HepG2 (cell line): ENCODE measurements at regions of chr11 and their contacts with region 1.

Region 1: GRCh38 chr11:34653826-34654490 is 33.1 kb downstream of the EHF start:
- DNase-seq: peak; percentile 92
- ATAC-seq: peak; percentile 84
- H3K4me3 ChIP-seq: peak overlapping the region in 2 of 3 experiments; percentile 40 to 56; a peak in 5 of 6 replicates
- H3K27ac ChIP-seq: peak overlapping the region; percentile 100
- H3K4me1 ChIP-seq: peaks cover 83% of the 10 kb centered on the region
- H3K27me3 ChIP-seq: no peaks in the 10 kb centered on the region
- CTCF ChIP-seq: peak; percentile 78
- EP300 ChIP-seq: no peak; a peak in 1 of 4 replicates
- POLR2A ChIP-seq: peak; percentile 35 to 74; a peak in 3 of 4 replicates
- RAD21 ChIP-seq: peak; percentile 72; the same call in 1 of the 2 replicates

Region 2: DNA sequence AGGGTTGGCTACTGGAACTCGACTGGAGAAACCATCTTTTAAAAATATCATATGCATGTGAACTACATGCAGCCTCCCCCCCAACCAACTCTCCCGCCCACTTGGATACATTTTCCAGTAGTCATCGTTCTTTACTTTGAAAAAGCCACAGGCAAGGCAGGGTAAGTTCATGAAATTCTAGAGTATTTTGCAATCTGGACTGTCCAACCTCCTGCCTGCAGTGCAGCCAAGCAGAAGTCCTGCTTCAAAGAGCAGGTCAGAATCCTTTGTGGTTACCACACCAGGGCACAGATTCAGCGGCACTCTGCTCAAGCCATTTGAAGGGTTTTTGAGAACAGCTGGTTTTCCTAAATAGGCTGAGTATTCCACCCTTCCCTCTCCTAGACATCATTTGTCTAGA is 152.5 kb before region 1 on chr11:
- CTCF ChIA-PET with region 1: no interaction called
- POLR2A ChIA-PET with region 1: no interaction called
- in situ Hi-C with region 1: no loop called
- intact Hi-C with region 1: loop called (anchors 1 kb)
- DNase-seq: peak; percentile 92
- ATAC-seq: peak; percentile 97
- H3K4me3 ChIP-seq: no peak overlapping the region
- H3K27ac ChIP-seq: peak overlapping the region; percentile 60
- H3K4me1 ChIP-seq: peaks cover 76% of the 10 kb centered on the region
- H3K27me3 ChIP-seq: no peaks in the 10 kb centered on the region
- CTCF ChIP-seq: no peak
- EP300 ChIP-seq: peak; percentile 55 to 87
- POLR2A ChIP-seq: peak in 1 of 2 experiments; percentile 43; a peak in 2 of 4 replicates
- RAD21 ChIP-seq: no peak

Region 3: GRCh38 chr11:34599406-34599901 is 54.5 kb before region 1 on chr11:
- CTCF ChIA-PET with region 1: no interaction called
- POLR2A ChIA-PET with region 1: interaction called, 126 read pairs
- in situ Hi-C with region 1: loop called (anchors 10 kb)
- intact Hi-C with region 1: loop called (anchors 1 kb)
- DNase-seq: peak; percentile 79
- ATAC-seq: peak; percentile 1; the same call in 1 of the 3 replicates
- H3K4me3 ChIP-seq: peak overlapping the region; percentile 49 to 67 (median 66)
- H3K27ac ChIP-seq: peak overlapping the region; percentile 95
- H3K4me1 ChIP-seq: peaks cover 86% of the 10 kb centered on the region
- H3K27me3 ChIP-seq: no peaks in the 10 kb centered on the region
- CTCF ChIP-seq: no peak
- EP300 ChIP-seq: peak in 1 of 2 experiments; percentile 52; a peak in 1 of 4 replicates
- POLR2A ChIP-seq: no peak
- RAD21 ChIP-seq: no peak

Region 4: DNA sequence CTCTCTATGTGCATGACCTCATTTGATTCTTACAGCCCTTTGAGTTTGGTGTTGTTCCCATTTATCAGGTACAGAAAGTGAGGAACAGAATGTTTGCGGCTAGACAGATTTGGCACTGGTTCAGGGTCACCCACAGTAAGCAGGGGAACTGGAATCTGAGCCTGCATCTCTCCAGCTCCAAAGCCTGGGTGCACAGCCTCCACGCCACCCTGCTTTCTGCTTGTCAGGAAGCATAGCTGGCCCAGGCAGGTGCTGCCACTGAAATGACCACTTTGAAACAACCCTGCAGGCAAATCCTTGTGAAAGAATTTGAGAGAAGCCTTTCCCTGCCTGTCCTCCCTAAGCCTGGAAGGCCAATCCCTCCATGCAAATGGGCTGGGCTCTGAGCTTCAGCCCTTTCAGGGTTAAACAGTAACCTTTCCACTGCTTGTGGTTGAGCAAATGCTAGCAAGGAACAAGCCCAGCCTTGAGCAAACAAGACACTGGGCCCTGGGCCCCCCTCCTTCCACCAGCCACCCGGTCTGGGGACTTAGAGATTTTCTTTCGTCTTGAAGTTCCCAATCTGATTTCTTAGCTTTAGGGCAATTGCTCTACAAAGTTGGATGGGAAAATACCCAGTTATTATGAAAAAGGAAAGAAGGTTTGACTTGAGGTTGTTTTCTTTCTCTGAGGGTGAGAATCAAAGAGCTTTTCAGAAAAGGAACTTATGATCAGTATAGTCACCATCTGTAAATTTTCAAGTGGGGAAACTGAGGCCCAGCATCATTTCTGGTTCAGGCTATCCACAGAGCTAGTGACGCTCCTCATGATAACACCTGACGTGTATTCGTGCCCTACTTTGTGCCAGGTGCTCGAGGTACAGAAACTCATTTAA is 13.7 kb before region 1 on chr11:
- CTCF ChIA-PET with region 1: no interaction called
- POLR2A ChIA-PET with region 1: interaction called, 145 read pairs
- in situ Hi-C with region 1: no loop called
- intact Hi-C with region 1: loop called (anchors 1 kb)
- DNase-seq: peak; percentile 94
- ATAC-seq: peak; percentile 98
- H3K4me3 ChIP-seq: peak overlapping the region in 1 of 3 experiments; percentile 47; a peak in 2 of 6 replicates
- H3K27ac ChIP-seq: peak overlapping the region; percentile 66
- H3K4me1 ChIP-seq: peaks cover 82% of the 10 kb centered on the region
- H3K27me3 ChIP-seq: no peaks in the 10 kb centered on the region
- CTCF ChIP-seq: peak; percentile 27; the same call in 1 of the 2 replicates
- EP300 ChIP-seq: peak in 1 of 2 experiments; percentile 81; a peak in 2 of 4 replicates
- POLR2A ChIP-seq: peak in 1 of 2 experiments; percentile 52; a peak in 2 of 4 replicates
- RAD21 ChIP-seq: peak; percentile 32; the same call in 1 of the 2 replicates

Region 5: DNA sequence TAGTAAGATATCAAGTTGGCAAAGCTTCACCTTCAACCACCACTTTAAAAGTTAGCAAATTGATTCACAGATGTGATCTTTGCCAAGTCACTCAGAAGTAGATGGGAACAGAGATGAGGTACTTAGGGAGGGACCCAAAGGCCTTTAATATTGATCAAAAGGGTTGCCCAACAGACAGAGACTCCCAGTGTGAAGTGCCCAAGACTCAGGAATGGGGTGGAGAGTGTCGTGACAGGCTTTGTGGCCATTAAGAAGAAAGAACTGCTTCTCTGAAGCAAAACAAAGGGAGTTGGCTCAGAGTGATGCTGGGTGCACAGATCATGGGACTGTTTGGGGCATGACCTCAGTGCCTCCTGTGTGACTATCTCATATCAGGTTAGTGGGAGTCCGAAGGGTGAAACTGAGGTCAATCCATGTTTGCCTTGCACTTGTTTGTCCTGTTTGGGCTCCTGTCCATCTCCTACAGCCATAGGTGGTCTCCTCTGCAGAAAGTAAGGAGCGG is 129.9 kb after region 1 on chr11:
- CTCF ChIA-PET with region 1: no interaction called
- POLR2A ChIA-PET with region 1: interaction called, 4 read pairs
- in situ Hi-C with region 1: no loop called
- intact Hi-C with region 1: loop called (anchors 1 kb)
- DNase-seq: peak; percentile 98
- ATAC-seq: peak; percentile 96
- H3K4me3 ChIP-seq: peak overlapping the region; percentile 2 to 38 (median 26); a peak in 4 of 6 replicates
- H3K27ac ChIP-seq: peak overlapping the region; percentile 92
- H3K4me1 ChIP-seq: peaks cover 46% of the 10 kb centered on the region
- H3K27me3 ChIP-seq: no peaks in the 10 kb centered on the region
- CTCF ChIP-seq: no peak
- EP300 ChIP-seq: peak in 1 of 2 experiments; percentile 84; a peak in 2 of 4 replicates
- POLR2A ChIP-seq: peak in 1 of 2 experiments; percentile 36; a peak in 1 of 4 replicates
- RAD21 ChIP-seq: no peak

Region 6: GRCh38 chr11:34890812-34891211 is 236.9 kb after region 1 on chr11:
- CTCF ChIA-PET with region 1: no interaction called
- POLR2A ChIA-PET with region 1: no interaction called
- in situ Hi-C with region 1: no loop called
- intact Hi-C with region 1: loop called (anchors 1 kb)
- DNase-seq: peak; percentile 59
- ATAC-seq: no peak
- H3K4me3 ChIP-seq: no peak overlapping the region
- H3K27ac ChIP-seq: no peak overlapping the region
- H3K4me1 ChIP-seq: peaks cover 22% of the 10 kb centered on the region
- H3K27me3 ChIP-seq: no peaks in the 10 kb centered on the region
- CTCF ChIP-seq: peak; percentile 61
- EP300 ChIP-seq: no peak
- POLR2A ChIP-seq: no peak
- RAD21 ChIP-seq: peak; percentile 51; the same call in 1 of the 2 replicates

Region 7: GRCh38 chr11:35391922-35392813 is 738.2 kb after region 1 on chr11:
- CTCF ChIA-PET with region 1: no interaction called
- POLR2A ChIA-PET with region 1: no interaction called
- in situ Hi-C with region 1: no loop called
- intact Hi-C with region 1: loop called (anchors 10 kb)
- DNase-seq: peak; percentile 60
- ATAC-seq: peak; percentile 88
- H3K4me3 ChIP-seq: peak overlapping the region in 2 of 3 experiments; percentile 32 to 34; a peak in 3 of 6 replicates
- H3K27ac ChIP-seq: no peak overlapping the region
- H3K4me1 ChIP-seq: peaks cover 30% of the 10 kb centered on the region
- H3K27me3 ChIP-seq: 0 out of 5 replicates have a peak, but pooled peaks cover 2 to 6% of the 10 kb centered on the region in 2 experiments
- CTCF ChIP-seq: peak; percentile 95
- EP300 ChIP-seq: no peak
- POLR2A ChIP-seq: no peak
- RAD21 ChIP-seq: peak; percentile 91